Cardiac septum (tissue), 1 donor: ENCODE measurements at regions of chr13 and their contacts with region 1.

Region 1: DNA sequence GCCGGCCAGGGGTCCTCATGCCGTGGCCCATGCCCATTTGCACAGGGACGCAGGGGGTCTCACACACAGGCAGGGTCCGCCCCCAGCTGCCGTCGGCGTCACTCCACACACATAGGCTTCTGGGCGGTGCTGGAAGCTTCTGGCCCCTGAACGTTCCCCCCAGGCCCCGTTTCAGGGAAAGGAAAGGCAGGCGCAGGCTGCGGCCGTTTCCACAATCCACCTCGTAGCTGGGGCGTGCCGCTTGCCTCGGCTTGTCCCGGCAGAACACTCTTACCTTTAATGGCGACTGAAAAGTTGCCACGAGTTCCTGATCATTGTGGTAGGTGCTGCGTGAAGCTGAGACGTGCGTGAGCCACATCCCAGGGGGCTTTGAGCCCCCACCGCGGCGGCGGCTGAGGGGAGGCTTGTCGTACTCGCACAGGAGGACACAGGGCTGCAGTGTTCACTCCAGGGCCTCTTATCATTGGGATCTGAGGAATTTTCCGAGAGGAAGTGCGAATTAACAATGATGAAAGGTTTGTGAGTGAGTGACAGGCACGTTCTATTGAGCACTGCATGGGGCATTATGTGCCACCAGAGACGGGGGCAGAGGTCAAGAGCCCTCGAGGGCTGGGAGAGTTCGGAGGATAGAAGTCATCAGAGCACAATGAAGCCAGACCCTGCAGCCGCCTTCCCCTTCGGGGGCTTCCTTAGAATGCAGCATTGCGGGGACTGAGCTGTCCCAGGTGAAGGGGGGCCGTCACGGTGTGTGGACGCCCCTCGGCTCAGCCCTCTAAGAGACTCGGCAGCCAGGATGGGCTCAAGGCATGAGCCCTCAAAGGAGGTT is 53.6 kb downstream of the MCF2L start:
- DNase-seq: no peak

Region 2: GRCh38 chr13:112893570-112894422 is 128.8 kb before region 1 on chr13:
- intact Hi-C with region 1: no loop called
- DNase-seq: no peak

Region 3: GRCh38 chr13:113009743-113010509 is 12.7 kb before region 1 on chr13:
- intact Hi-C with region 1: loop called (anchors 2 kb)
- DNase-seq: no peak